B cell (primary cell): ENCODE measurements at regions of chr4 and their contacts with region 1.

Region 1: DNA sequence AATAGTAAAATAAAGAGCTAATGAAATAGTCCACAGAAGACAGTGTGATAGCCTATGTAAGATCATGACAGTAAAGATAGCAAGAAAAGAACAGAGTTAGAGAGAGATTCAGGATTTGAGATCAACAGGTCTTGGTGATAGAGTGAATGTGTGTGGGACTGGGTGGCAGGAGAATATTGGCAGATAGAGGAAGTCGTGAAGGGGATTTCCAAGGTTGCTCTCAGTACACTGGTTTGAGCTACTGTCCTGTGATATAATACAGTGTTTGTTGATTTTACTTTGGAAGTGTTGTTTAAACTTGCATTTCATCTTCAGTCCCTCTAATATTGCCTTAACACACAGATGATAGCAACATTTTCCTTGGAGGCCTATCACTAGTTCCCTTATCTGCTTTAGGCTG is 44.1 kb downstream of the DTHD1 start:
- DNase-seq: peak; percentile 81
- ATAC-seq: peak; percentile 89
- H3K4me3 ChIP-seq: peak overlapping the region in 2 of 5 experiments; percentile 7 to 44
- H3K4me3 Mint-ChIP-seq: peak overlapping the region; percentile 69
- H3K27ac ChIP-seq: peak overlapping the region; percentile 76 to 85
- H3K27ac Mint-ChIP-seq: peak overlapping the region; percentile 90
- H3K4me1 ChIP-seq: peaks cover 44 to 49% of the 10 kb centered on the region in 2 donors
- H3K4me1 Mint-ChIP-seq: peaks cover 68% of the 10 kb centered on the region
- H3K27me3 ChIP-seq: no peaks in the 10 kb centered on the region
- H3K27me3 Mint-ChIP-seq: no peaks in the 10 kb centered on the region
- CTCF ChIP-seq: no peak

Region 2: DNA sequence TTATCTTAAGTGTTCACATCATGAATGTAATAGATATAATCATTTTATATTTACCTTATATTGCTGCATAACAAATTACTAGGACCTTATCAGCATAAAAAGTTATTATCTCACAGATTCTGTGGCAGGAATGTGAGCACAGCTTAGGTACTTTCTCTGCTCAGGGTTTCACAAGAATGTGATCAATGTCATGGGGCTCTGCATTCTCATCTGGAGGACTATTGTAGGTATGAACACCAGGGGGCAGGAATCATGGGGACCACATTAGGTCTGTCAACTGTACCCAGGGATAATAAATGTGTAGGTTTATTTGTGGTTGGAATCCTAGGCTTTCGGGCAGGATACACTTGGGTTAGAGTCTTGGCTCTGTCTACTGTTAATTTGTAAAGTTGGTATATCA is 600.4 kb before region 1 on chr4:
- CTCF ChIA-PET with region 1: no interaction called
- POLR2A ChIA-PET with region 1: no interaction called
- intact Hi-C with region 1: no loop called
- DNase-seq: no peak
- ATAC-seq: no peak
- H3K4me3 ChIP-seq: no peak overlapping the region
- H3K4me3 Mint-ChIP-seq: no peak overlapping the region
- H3K27ac ChIP-seq: no peak overlapping the region
- H3K27ac Mint-ChIP-seq: no peak overlapping the region
- H3K4me1 ChIP-seq: no peaks in the 10 kb centered on the region
- H3K4me1 Mint-ChIP-seq: no peaks in the 10 kb centered on the region
- H3K27me3 ChIP-seq: no peaks in the 10 kb centered on the region
- H3K27me3 Mint-ChIP-seq: no peaks in the 10 kb centered on the region
- CTCF ChIP-seq: no peak

Region 3: DNA sequence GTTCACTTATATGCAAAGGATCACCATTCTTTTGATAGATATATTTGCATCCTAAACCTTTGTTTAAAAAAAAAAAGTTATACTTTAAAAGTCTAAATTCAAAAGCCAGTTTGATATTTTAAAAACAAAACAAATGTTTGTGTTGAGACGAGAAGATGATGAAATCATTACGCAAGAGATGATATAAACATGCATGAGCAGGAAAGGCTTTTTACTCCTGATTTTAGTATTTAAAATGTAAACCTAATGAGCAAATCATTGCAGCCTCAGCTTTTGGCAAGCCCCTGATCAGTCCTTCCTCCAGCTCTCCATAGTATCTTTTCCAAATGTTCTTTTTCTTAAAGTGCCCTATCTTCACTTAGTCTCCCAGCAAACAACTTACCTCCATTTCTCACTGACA is 196.8 kb before region 1 on chr4:
- CTCF ChIA-PET with region 1: no interaction called
- POLR2A ChIA-PET with region 1: no interaction called
- intact Hi-C with region 1: no loop called
- DNase-seq: no peak
- ATAC-seq: no peak
- H3K4me3 ChIP-seq: no peak overlapping the region
- H3K4me3 Mint-ChIP-seq: no peak overlapping the region
- H3K27ac ChIP-seq: no peak overlapping the region
- H3K27ac Mint-ChIP-seq: no peak overlapping the region
- H3K4me1 ChIP-seq: no peaks in the 10 kb centered on the region
- H3K4me1 Mint-ChIP-seq: no peaks in the 10 kb centered on the region
- H3K27me3 ChIP-seq: no peaks in the 10 kb centered on the region
- H3K27me3 Mint-ChIP-seq: no peaks in the 10 kb centered on the region
- CTCF ChIP-seq: no peak

Region 4: GRCh38 chr4:36255577-36255976 is 69.9 kb before region 1 on chr4:
- CTCF ChIA-PET with region 1: interaction called, 3 read pairs
- POLR2A ChIA-PET with region 1: no interaction called
- intact Hi-C with region 1: loop called (anchors 2 kb)
- DNase-seq: peak; percentile 76
- ATAC-seq: peak; percentile 92
- H3K4me3 ChIP-seq: peak overlapping the region in 4 of 5 experiments; percentile 15 to 61 (median 18)
- H3K4me3 Mint-ChIP-seq: peak overlapping the region; percentile 78
- H3K27ac ChIP-seq: peak overlapping the region; percentile 13 to 80
- H3K27ac Mint-ChIP-seq: peak overlapping the region; percentile 93
- H3K4me1 ChIP-seq: peaks cover 22 to 26% of the 10 kb centered on the region in 2 donors
- H3K4me1 Mint-ChIP-seq: peaks cover 32% of the 10 kb centered on the region
- H3K27me3 ChIP-seq: no peaks in the 10 kb centered on the region
- H3K27me3 Mint-ChIP-seq: no peaks in the 10 kb centered on the region
- CTCF ChIP-seq: no peak

Region 5: GRCh38 chr4:36310793-36311192 is 14.7 kb before region 1 on chr4:
- CTCF ChIA-PET with region 1: interaction called, 3 read pairs
- POLR2A ChIA-PET with region 1: interaction called, 7 read pairs
- intact Hi-C with region 1: loop called (anchors 1 kb)
- DNase-seq: peak; percentile 57
- ATAC-seq: peak; percentile 82
- H3K4me3 ChIP-seq: peak overlapping the region in 3 of 5 experiments; percentile 11 to 40 (median 21)
- H3K4me3 Mint-ChIP-seq: peak overlapping the region; percentile 55
- H3K27ac ChIP-seq: peak overlapping the region; percentile 5 to 31
- H3K27ac Mint-ChIP-seq: peak overlapping the region; percentile 76
- H3K4me1 ChIP-seq: peaks cover 27 to 50% of the 10 kb centered on the region in 2 donors
- H3K4me1 Mint-ChIP-seq: peaks cover 68% of the 10 kb centered on the region
- H3K27me3 ChIP-seq: no peaks in the 10 kb centered on the region
- H3K27me3 Mint-ChIP-seq: no peaks in the 10 kb centered on the region
- CTCF ChIP-seq: no peak